Activated CD4-positive, alpha-beta memory T cell treated with anti-CD3 and anti-CD28 coated beads for 36 hours (primary cell): ENCODE measurements at regions of chr2 and their contacts with region 1.

Region 1: DNA sequence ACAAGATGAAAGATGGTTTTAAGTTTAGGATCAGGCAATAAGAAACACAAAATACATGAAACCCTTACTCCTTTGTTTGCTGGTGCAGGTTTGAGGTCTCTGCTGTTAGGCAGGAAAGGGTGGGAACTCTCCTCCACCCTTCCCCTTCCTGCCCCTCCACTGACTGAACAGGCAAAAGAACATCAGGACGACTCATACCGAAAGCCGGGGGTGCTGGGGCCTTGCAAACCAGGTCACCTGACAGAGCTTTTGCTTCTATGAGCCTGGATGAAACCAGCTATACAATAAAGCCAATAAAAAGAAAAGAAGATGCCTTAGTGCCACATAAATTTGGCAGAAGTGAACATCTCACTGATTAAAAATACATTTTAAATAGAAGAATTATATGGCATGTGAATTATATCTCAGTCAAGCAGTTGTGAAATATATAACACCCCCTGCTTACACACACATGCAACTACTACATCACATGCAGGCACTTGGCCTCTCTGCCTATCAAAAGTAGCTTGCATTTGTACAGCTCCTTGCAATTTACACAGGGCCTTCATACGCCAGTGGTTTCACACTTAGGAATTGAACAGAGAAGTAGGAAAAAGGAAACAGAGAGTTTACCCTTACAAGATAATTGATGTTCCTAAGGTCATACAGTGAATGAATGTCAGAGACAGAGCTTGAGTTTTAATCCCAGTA is 215.1 kb upstream of the TRIB2 start:
- DNase-seq: peak; percentile 89
- H3K4me3 Mint-ChIP-seq: peak overlapping the region; percentile 17
- H3K27ac Mint-ChIP-seq: peak overlapping the region; percentile 71
- H3K4me1 Mint-ChIP-seq: peaks cover 92% of the 10 kb centered on the region
- H3K27me3 Mint-ChIP-seq: no peaks in the 10 kb centered on the region

Region 2: GRCh38 chr2:11753886-11754699 is 747.5 kb before region 1 on chr2:
- CTCF ChIA-PET with region 1: no interaction called
- POLR2A ChIA-PET with region 1: no interaction called
- intact Hi-C with region 1: loop called (anchors 5 kb)
- DNase-seq: peak; percentile 87
- H3K4me3 Mint-ChIP-seq: peak overlapping the region; percentile 72
- H3K27ac Mint-ChIP-seq: peak overlapping the region; percentile 97
- H3K4me1 Mint-ChIP-seq: peaks cover 90% of the 10 kb centered on the region
- H3K27me3 Mint-ChIP-seq: no peaks in the 10 kb centered on the region

Region 3: DNA sequence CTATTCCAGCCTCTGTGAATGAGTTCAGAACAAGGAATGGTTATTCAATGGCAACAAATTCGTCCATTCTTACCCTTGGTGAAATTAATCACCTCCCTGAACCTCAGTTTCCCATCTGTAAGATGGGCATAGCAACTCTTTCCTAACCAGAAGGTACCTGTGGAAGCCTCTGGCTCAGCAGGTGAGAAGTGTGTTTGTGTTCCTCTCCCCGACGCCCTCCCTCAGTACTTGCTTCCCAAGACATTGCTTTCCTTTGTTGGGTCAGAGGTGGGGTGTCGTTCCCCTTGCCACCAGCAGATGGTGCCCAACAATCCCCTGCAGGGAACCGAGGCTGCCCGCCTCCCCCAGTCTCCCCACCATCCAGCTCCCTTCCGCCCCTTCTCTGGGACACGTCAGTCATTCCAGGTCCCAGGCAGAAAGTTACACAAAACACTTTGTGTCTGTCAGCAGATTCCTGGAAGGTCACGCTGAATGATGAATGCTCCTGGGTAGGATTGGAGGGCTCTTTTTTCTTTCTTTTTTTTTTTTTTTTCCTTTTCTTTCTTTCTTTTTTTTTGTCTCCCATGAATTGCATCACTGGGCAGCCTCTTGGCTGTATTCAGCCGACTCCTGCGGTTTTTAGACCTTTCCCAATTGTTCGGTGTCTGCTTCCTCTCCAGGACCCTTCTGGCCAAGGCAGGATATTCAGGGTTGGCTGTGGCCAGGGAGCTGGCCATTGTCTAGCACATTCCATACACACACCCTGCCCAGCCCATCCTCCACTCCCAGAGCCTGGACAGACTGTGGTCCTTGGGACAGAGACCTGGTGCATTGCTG is 637.9 kb before region 1 on chr2:
- CTCF ChIA-PET with region 1: no interaction called
- POLR2A ChIA-PET with region 1: no interaction called
- intact Hi-C with region 1: loop called (anchors 5 kb)
- DNase-seq: peak; percentile 76
- H3K4me3 Mint-ChIP-seq: peak overlapping the region; percentile 25
- H3K27ac Mint-ChIP-seq: no peak overlapping the region
- H3K4me1 Mint-ChIP-seq: peaks cover 41% of the 10 kb centered on the region
- H3K27me3 Mint-ChIP-seq: no peaks in the 10 kb centered on the region

Region 4: DNA sequence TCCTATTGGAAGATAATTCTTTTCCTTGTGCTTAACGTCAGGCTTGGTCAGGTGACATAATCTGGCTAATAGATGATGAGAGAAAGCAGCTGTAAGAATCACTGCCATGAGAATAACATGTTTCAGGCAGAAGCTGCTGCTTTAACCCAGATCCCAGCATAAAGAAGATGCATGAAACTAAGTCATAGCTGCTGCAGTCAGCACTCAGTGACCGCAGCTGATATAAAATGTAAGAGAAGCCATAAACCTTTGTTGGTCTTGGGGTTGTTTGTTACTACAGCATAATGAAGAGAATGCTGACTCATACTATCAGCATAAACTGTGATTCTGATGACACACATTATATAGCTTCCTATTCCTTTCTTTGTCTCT is 59.2 kb before region 1 on chr2:
- CTCF ChIA-PET with region 1: no interaction called
- POLR2A ChIA-PET with region 1: interaction called, 10 read pairs
- intact Hi-C with region 1: no loop called
- DNase-seq: peak; percentile 28
- H3K4me3 Mint-ChIP-seq: no peak overlapping the region
- H3K27ac Mint-ChIP-seq: no peak overlapping the region
- H3K4me1 Mint-ChIP-seq: peaks cover 25% of the 10 kb centered on the region
- H3K27me3 Mint-ChIP-seq: no peaks in the 10 kb centered on the region

Region 5: GRCh38 chr2:12514631-12515433 is 13.2 kb after region 1 on chr2:
- CTCF ChIA-PET with region 1: no interaction called
- POLR2A ChIA-PET with region 1: no interaction called
- intact Hi-C with region 1: loop called (anchors 1 kb)
- DNase-seq: peak; percentile 54
- H3K4me3 Mint-ChIP-seq: peak overlapping the region; percentile 9
- H3K27ac Mint-ChIP-seq: peak overlapping the region; percentile 26
- H3K4me1 Mint-ChIP-seq: peaks cover 46% of the 10 kb centered on the region
- H3K27me3 Mint-ChIP-seq: no peaks in the 10 kb centered on the region

Region 6: GRCh38 chr2:12567411-12567810 is 65.8 kb after region 1 on chr2:
- CTCF ChIA-PET with region 1: no interaction called
- POLR2A ChIA-PET with region 1: no interaction called
- intact Hi-C with region 1: no loop called
- DNase-seq: no peak
- H3K4me3 Mint-ChIP-seq: no peak overlapping the region
- H3K27ac Mint-ChIP-seq: no peak overlapping the region
- H3K4me1 Mint-ChIP-seq: peaks cover 10% of the 10 kb centered on the region
- H3K27me3 Mint-ChIP-seq: no peaks in the 10 kb centered on the region

Region 7: GRCh38 chr2:12721566-12722446 is 220.2 kb after region 1 on chr2:
- CTCF ChIA-PET with region 1: interaction called, 12 read pairs
- POLR2A ChIA-PET with region 1: no interaction called
- intact Hi-C with region 1: loop called (anchors 1 kb)
- DNase-seq: peak; percentile 63
- H3K4me3 Mint-ChIP-seq: peak overlapping the region; percentile 86
- H3K27ac Mint-ChIP-seq: peak overlapping the region; percentile 75
- H3K4me1 Mint-ChIP-seq: peaks cover 77% of the 10 kb centered on the region
- H3K27me3 Mint-ChIP-seq: no peaks in the 10 kb centered on the region